A549 (cell line): ENCODE measurements at regions of chr15 and their contacts with region 1.

Region 1: GRCh38 chr15:33086507-33087121 is 107.9 kb downstream of the FMN1 start:
- DNase-seq: peak; percentile 40 to 71
- ATAC-seq: peak; percentile 84 to 92; a peak in 5 of 6 replicates
- H3K4me3 ChIP-seq: no peak overlapping the region
- H3K27ac ChIP-seq: no peak overlapping the region
- H3K4me1 ChIP-seq: no peaks in the 10 kb centered on the region
- CTCF ChIP-seq: peak; percentile 88
- EP300 ChIP-seq: no peak
- POLR2A ChIP-seq: no peak
- RAD21 ChIP-seq: peak; percentile 84

Region 2: DNA sequence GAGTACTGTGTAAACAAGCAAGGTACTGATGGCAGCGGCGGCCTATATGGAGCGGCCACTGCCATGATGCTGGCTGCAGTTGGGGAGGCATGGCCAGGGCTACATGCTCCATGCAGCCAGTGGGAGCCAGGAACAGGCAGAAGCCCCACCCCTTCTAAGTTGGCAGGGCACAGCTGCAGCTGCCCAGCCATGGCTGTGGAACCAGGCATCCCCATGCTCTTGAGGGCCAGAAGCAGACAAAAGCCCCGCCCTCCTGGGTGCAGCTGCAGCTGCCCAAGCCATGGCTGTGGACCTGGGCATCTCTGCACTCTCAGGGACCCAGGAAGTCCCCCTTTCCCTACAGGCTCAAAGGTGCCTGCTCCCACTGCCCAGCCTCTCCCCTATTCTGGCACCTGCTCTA is 43.0 kb before region 1 on chr15:
- CTCF ChIA-PET with region 1: no interaction called
- POLR2A ChIA-PET with region 1: no interaction called
- DNase-seq: no peak
- ATAC-seq: no peak
- H3K4me3 ChIP-seq: no peak overlapping the region
- H3K27ac ChIP-seq: no peak overlapping the region
- H3K4me1 ChIP-seq: no peaks in the 10 kb centered on the region
- CTCF ChIP-seq: no peak
- EP300 ChIP-seq: no peak
- POLR2A ChIP-seq: no peak
- RAD21 ChIP-seq: no peak

Region 3: DNA sequence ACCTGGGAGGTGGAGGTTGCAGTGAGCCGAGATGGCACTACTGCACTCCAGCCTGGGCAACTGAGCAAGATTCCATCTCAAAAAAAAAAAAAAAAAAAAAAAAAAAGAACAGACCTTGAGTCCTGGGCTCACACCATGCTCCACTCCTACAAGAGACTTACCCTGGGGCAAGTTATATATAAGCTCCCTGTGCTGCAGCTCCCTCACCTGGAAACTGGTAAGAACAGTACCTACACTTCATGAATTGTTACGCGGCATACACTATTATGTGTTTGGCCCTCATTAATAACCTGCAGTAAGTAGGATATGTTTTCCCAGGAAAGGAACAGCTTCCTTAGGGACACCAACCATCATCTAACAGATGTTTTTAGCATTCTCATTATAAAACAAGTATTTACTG is 11.7 kb before region 1 on chr15:
- CTCF ChIA-PET with region 1: interaction called, 21 read pairs
- POLR2A ChIA-PET with region 1: no interaction called
- DNase-seq: no peak
- ATAC-seq: peak in 1 of 2 experiments; percentile 60; a peak in 3 of 6 replicates
- H3K4me3 ChIP-seq: no peak overlapping the region
- H3K27ac ChIP-seq: no peak overlapping the region
- H3K4me1 ChIP-seq: no peaks in the 10 kb centered on the region
- CTCF ChIP-seq: no peak
- EP300 ChIP-seq: no peak
- POLR2A ChIP-seq: no peak
- RAD21 ChIP-seq: no peak

Region 4: DNA sequence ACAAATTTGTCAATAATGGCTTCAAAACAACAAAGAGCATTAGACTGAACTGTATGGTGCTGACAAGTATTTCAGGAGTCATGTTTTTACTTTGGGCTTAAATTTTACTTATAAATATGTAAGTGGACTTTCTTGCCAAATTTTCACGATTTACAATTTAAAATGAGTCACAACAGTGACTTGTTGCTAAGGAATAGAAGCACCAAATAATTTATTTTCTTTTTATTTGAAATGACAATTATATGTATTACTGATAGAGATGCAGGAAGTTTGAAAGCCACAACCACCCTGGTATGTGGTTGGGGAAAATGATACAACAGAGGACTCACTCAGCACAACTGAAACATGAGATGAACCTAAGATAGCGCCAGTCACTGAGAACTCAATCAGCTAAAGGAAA is 17.6 kb after region 1 on chr15:
- CTCF ChIA-PET with region 1: interaction called, 18 read pairs
- POLR2A ChIA-PET with region 1: no interaction called
- DNase-seq: no peak
- ATAC-seq: no peak
- H3K4me3 ChIP-seq: no peak overlapping the region
- H3K27ac ChIP-seq: no peak overlapping the region
- H3K4me1 ChIP-seq: no peaks in the 10 kb centered on the region
- CTCF ChIP-seq: no peak
- EP300 ChIP-seq: no peak
- POLR2A ChIP-seq: no peak
- RAD21 ChIP-seq: no peak

Region 5: DNA sequence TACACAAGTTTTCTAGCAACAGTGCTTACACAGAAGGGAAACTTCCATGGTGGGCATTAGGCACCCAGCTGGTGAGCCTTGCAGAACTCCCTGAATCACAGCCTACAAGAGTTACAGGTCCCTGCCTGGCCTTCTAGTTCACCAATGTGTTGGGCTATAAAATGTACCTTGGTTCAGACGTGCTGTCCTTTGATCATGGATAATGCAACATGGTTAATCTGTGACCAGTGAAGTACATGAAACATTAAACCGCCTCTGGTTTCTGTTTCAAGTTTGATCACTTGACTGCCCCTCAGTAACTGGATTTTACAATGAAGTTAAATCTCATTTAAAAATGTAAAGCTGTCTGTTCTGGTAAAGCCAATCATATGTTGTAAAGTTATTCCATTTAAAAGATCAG is 56.1 kb after region 1 on chr15:
- CTCF ChIA-PET with region 1: interaction called, 346 read pairs
- POLR2A ChIA-PET with region 1: no interaction called
- DNase-seq: no peak
- ATAC-seq: no peak
- H3K4me3 ChIP-seq: no peak overlapping the region
- H3K27ac ChIP-seq: no peak overlapping the region
- H3K4me1 ChIP-seq: no peaks in the 10 kb centered on the region
- CTCF ChIP-seq: no peak
- EP300 ChIP-seq: no peak
- POLR2A ChIP-seq: no peak
- RAD21 ChIP-seq: no peak